Naive thymus-derived CD4-positive, alpha-beta T cell (primary cell): ENCODE measurements at regions of chr15 and their contacts with region 1.

Region 1: GRCh38 chr15:52256366-52256765 is 39.2 kb downstream of the MYO5C start:
- DNase-seq: peak; percentile 27 to 80 (median 75)
- ATAC-seq: peak; percentile 98
- H3K4me3 ChIP-seq: peak overlapping the region; percentile 14
- H3K4me3 Mint-ChIP-seq: peak overlapping the region; percentile 49 to 85 (median 72)
- H3K27ac ChIP-seq: no peak overlapping the region
- H3K27ac Mint-ChIP-seq: peak overlapping the region; percentile 4 to 96 (median 65)
- H3K4me1 ChIP-seq: peaks cover 0 to 12% of the 10 kb centered on the region in 2 donors
- H3K4me1 Mint-ChIP-seq: peaks cover 5 to 55% (median 17%) of the 10 kb centered on the region in 7 donors
- H3K27me3 ChIP-seq: no peaks in the 10 kb centered on the region
- H3K27me3 Mint-ChIP-seq: no peaks in the 10 kb centered on the region

Region 2: GRCh38 chr15:51931638-51932037 is 324.7 kb before region 1 on chr15:
- CTCF ChIA-PET with region 1: no interaction called
- POLR2A ChIA-PET with region 1: no interaction called
- intact Hi-C with region 1: no loop called
- DNase-seq: no peak
- ATAC-seq: no peak
- H3K4me3 ChIP-seq: no peak overlapping the region
- H3K4me3 Mint-ChIP-seq: no peak overlapping the region
- H3K27ac ChIP-seq: no peak overlapping the region
- H3K27ac Mint-ChIP-seq: peak overlapping the region in 1 of 9 donors; percentile 41
- H3K4me1 ChIP-seq: no peaks in the 10 kb centered on the region
- H3K4me1 Mint-ChIP-seq: peaks cover 0 to 7% (median 0%) of the 10 kb centered on the region in 7 donors
- H3K27me3 ChIP-seq: no peaks in the 10 kb centered on the region
- H3K27me3 Mint-ChIP-seq: no peaks in the 10 kb centered on the region

Region 3: DNA sequence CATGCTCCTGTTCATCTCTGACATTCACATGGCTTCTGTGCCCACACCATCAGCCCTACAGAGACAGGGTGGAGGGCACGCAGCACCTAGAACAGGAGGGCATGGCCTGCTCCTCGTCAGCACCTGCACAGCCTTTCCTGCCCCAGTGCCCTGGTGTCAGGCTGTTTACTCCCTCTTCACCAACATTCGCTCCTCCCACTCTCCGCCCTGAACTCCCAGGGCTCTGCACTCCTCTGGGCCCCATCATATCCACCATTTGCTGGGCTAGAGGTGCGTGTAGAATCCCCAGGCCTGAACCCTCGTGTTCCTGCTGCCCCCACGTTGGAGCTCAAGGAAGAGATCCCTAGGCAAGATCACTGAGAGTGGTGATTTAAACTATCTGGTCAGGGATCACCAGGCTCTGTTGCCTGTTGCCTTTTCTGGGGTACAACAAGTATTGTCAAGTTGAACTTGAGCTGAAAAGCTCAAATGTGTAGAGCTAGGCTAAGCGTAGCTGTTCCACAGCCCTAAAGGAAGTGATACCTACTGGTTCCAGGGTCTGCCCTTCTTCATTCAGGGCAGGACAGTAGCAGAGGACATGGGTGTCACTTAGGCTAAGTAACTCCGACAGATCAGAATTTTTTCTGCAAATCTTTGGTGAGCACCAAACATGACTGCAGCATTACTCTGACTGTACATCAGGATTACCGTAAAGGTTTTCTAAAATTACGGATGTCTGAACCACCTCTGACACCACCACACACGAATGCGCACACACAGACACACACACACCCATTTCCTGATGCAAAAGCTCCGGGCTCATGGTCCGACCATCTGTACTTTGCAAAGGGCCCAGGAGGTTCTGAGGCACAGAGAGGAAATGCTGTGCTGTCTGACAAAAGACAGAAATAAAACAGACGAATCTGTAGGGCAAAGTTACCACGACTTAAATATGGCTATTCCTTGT is 21.5 kb before region 1 on chr15:
- CTCF ChIA-PET with region 1: interaction called, 25 read pairs
- POLR2A ChIA-PET with region 1: interaction called, 7 read pairs
- intact Hi-C with region 1: loop called in 1 of 2 experiments (anchors 2 kb)
- DNase-seq: peak in 6 of 9 donors; percentile 27 to 55 (median 51)
- ATAC-seq: peak; percentile 82
- H3K4me3 ChIP-seq: no peak overlapping the region
- H3K4me3 Mint-ChIP-seq: peak overlapping the region; percentile 39 to 83 (median 73)
- H3K27ac ChIP-seq: peak overlapping the region; percentile 71
- H3K27ac Mint-ChIP-seq: peak overlapping the region; percentile 68 to 98 (median 96)
- H3K4me1 ChIP-seq: peaks cover 0 to 29% of the 10 kb centered on the region in 2 donors
- H3K4me1 Mint-ChIP-seq: peaks cover 23 to 58% (median 46%) of the 10 kb centered on the region in 7 donors
- H3K27me3 ChIP-seq: no peaks in the 10 kb centered on the region
- H3K27me3 Mint-ChIP-seq: no peaks in the 10 kb centered on the region

Region 4: DNA sequence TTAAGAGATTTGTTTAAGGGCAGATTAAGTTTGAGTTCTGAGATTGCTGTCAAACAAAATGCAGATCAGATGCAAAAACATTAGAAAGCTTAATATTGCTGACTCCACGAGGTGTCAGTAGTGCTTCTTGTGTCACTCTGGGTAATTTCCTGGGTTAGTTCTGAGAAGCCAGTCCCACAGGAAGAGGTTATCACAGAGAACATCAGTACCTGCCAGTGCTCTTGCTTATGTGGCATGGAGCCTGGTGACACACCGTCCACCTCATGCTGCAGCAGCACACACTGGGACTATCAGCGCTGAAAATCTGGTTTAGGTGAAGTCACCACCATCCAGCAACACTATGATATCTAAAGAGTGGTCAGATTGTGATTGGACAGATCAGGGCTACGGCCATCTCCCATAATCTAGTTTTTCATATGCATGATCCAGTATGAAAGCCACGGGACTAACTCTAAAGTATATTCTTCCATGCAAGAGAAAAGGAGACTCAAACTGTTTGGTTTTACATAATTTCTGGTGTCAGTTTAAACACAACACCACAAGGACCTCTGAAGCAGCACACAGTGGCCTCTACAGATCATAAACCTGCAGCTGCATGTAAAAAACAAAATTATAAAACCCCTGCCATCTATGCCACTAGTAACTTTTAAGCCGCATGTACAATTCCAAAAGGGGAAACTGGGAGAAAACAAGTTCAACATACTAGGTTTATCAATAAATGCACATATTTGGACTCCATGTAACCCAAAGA is 75.3 kb after region 1 on chr15:
- CTCF ChIA-PET with region 1: interaction called, 6 read pairs
- POLR2A ChIA-PET with region 1: no interaction called
- intact Hi-C with region 1: loop called (anchors 1 kb)
- DNase-seq: peak in 8 of 9 donors; percentile 43 to 70 (median 54)
- ATAC-seq: peak; percentile 97
- H3K4me3 ChIP-seq: no peak overlapping the region
- H3K4me3 Mint-ChIP-seq: peak overlapping the region in 8 of 10 donors; percentile 26 to 81 (median 54)
- H3K27ac ChIP-seq: no peak overlapping the region
- H3K27ac Mint-ChIP-seq: peak overlapping the region; percentile 53 to 92 (median 71)
- H3K4me1 ChIP-seq: peaks cover 10 to 11% of the 10 kb centered on the region in 2 donors
- H3K4me1 Mint-ChIP-seq: peaks cover 11 to 23% (median 19%) of the 10 kb centered on the region in 7 donors
- H3K27me3 ChIP-seq: no peaks in the 10 kb centered on the region
- H3K27me3 Mint-ChIP-seq: no peaks in the 10 kb centered on the region

Region 5: DNA sequence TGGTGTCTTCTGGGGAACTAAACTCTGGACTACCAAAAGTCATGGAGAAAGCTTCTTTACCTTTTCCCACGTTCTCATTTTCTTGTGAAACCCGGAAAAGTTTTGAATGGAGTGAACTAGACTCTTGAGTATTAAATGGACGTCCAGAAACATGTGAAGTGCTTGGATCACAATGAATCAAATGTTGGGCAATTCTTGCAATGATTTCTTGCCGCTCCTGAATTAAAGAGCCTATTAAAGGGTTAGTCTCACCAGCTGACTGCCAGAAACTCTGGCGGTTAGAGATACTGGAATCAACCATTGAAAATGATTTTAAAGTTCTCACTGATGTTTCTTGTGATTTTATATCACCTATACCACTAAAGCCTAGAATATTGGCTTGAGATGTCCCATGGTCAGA is 353.2 kb after region 1 on chr15:
- CTCF ChIA-PET with region 1: no interaction called
- POLR2A ChIA-PET with region 1: interaction called, 5 read pairs
- intact Hi-C with region 1: loop called in 1 of 2 experiments (anchors 10 kb)
- DNase-seq: no peak
- ATAC-seq: no peak
- H3K4me3 ChIP-seq: no peak overlapping the region
- H3K4me3 Mint-ChIP-seq: no peak overlapping the region
- H3K27ac ChIP-seq: no peak overlapping the region
- H3K27ac Mint-ChIP-seq: no peak overlapping the region
- H3K4me1 ChIP-seq: no peaks in the 10 kb centered on the region
- H3K4me1 Mint-ChIP-seq: no peaks in the 10 kb centered on the region
- H3K27me3 ChIP-seq: no peaks in the 10 kb centered on the region
- H3K27me3 Mint-ChIP-seq: no peaks in the 10 kb centered on the region

Region 6: DNA sequence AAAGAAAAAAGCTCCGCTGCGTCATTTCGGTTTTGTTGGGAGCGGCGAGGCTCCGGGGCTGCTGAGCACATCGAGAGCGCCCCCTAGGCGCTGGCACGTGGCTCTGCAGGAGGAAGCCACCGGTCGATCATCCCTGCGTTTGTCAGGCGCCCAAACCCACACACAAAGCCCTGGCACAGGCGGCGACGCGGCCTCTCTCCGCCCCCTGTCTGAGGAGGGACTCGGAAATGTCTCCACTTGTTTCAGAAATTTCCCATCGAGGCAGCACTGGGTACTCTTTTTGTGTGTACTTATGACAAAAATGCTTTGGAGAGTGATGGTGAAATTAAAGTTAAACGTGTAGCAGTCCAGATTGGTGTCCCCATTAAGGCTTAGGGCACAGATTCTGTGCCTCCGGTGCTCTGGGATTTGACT is 941.1 kb after region 1 on chr15:
- CTCF ChIA-PET with region 1: no interaction called
- POLR2A ChIA-PET with region 1: no interaction called
- intact Hi-C with region 1: loop called in 1 of 2 experiments (anchors 10 kb)
- DNase-seq: peak in 2 of 9 donors; percentile 2 to 56
- ATAC-seq: no peak
- H3K4me3 ChIP-seq: no peak overlapping the region
- H3K4me3 Mint-ChIP-seq: no peak overlapping the region
- H3K27ac ChIP-seq: no peak overlapping the region
- H3K27ac Mint-ChIP-seq: no peak overlapping the region
- H3K4me1 ChIP-seq: no peaks in the 10 kb centered on the region
- H3K4me1 Mint-ChIP-seq: peaks cover 0 to 7% (median 0%) of the 10 kb centered on the region in 7 donors
- H3K27me3 ChIP-seq: peaks cover 0 to 4% of the 10 kb centered on the region in 2 donors
- H3K27me3 Mint-ChIP-seq: peaks cover 8 to 45% (median 32%) of the 10 kb centered on the region in 5 donors